ENCODE measurements at regions of chr7 and their contacts with region 1.

Region 1: DNA sequence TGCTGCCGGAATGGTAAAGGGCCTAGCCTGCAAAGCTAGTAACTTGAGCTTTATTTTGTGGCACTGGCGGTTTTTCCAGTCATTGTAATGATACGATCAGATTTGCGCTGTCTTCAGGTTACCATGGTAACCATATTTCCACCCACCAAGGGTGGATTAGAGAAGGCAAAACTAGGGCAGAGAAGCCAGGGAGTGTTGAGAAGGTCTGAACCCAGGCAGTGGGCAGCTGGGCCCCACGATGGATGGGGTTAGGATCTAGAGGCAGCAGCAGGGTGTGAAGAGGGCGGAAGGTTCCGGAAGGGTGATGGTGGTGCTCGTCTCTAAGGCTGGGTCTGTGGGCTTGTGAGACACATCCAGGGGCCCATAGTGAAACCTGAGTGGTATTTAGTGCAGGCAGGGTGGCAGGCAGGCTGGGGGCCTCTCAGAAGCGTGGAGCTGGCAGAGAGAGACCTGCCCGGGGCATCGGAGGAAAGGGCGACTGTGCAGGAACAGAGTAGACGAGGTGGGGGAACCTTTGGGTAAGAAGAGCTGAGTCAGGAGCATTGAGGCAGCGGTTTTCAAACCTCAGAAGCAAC is 87.9 kb upstream of the GTF2I start:
- DNase-seq: no peak
- ATAC-seq: no peak
- H3K4me3 ChIP-seq: no peak overlapping the region
- H3K27ac ChIP-seq: no peak overlapping the region
- H3K4me1 ChIP-seq: no peaks in the 10 kb centered on the region
- H3K27me3 ChIP-seq: no peaks in the 10 kb centered on the region
- CTCF ChIP-seq: no peak

Region 2: DNA sequence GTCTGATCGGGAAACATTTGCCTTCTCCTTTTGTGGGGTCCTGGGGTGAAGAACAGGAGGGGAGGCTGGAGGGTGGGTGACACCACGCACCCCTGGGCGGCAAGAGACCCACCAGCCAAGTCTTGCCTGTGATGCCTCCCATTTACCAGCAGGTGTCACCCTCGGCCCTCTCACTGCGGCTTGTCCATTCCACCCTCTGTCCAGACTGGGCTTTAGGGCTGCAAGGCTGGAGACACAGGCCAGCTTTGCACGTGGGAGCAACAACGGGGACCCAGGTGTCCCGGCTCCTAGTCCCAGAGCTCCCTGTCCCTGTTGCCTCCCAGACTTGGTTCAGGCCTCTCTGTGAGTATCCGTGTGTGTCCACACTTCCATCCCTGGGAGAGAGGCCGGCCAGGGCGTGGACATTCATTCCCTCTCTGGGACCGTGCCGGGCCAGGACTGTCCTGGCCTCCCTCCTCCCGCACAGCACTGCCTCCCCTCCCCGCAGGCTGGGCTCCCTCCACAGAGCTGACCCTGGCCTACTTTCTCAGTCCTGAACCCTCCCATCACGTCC is 152.1 kb before region 1 on chr7:
- intact Hi-C with region 1: loop called in 9 of 10 experiments (anchors 1 to 10 kb)
- DNase-seq: peak; percentile 64 to 69
- ATAC-seq: peak; percentile 84 to 94 (median 92)
- H3K4me3 ChIP-seq: no peak overlapping the region
- H3K27ac ChIP-seq: no peak overlapping the region
- H3K4me1 ChIP-seq: peaks cover 0 to 7% (median 0%) of the 10 kb centered on the region in 9 donors
- H3K27me3 ChIP-seq: peaks cover 0 to 5% (median 0%) of the 10 kb centered on the region in 7 donors
- CTCF ChIP-seq: peak; percentile 92 to 98 (median 96)

Region 3: GRCh38 chr7:74525140-74525539 is 44.4 kb before region 1 on chr7:
- intact Hi-C with region 1: no loop called
- DNase-seq: no peak
- ATAC-seq: no peak
- H3K4me3 ChIP-seq: no peak overlapping the region
- H3K27ac ChIP-seq: no peak overlapping the region
- H3K4me1 ChIP-seq: no peaks in the 10 kb centered on the region
- H3K27me3 ChIP-seq: no peaks in the 10 kb centered on the region
- CTCF ChIP-seq: no peak

Region 4: GRCh38 chr7:74612015-74612829 is 42.6 kb after region 1 on chr7:
- intact Hi-C with region 1: loop called in 1 of 10 experiments (anchors 10 kb)
- DNase-seq: peak in 1 of 2 donors; percentile 17
- ATAC-seq: peak in 5 of 8 donors; percentile 30 to 69 (median 39)
- H3K4me3 ChIP-seq: no peak overlapping the region
- H3K27ac ChIP-seq: peak overlapping the region in 1 of 10 donors; percentile 11
- H3K4me1 ChIP-seq: peaks cover 0 to 11% (median under 1%) of the 10 kb centered on the region in 9 donors
- H3K27me3 ChIP-seq: no peaks in the 10 kb centered on the region
- CTCF ChIP-seq: no peak

Measured in heart right ventricle (tissue), 16 donors.